ENCODE measurements at regions of chr6 and their contacts with region 1.

Region 1: GRCh38 chr6:74091136-74091793 is 395.3 kb downstream of the CD109 start:
- DNase-seq: peak; percentile 18
- H3K4me3 ChIP-seq: no peak overlapping the region; a peak in 1 of 4 replicates
- H3K27ac ChIP-seq: no peak overlapping the region
- H3K4me1 ChIP-seq: no peaks in the 10 kb centered on the region
- H3K27me3 ChIP-seq: no peaks in the 10 kb centered on the region
- CTCF ChIP-seq: peak; percentile 77
- EP300 ChIP-seq: no peak
- RAD21 ChIP-seq: peak; percentile 50

Region 2: GRCh38 chr6:73866305-73866704 is 225.0 kb before region 1 on chr6:
- CTCF ChIA-PET with region 1: no interaction called
- POLR2A ChIA-PET with region 1: no interaction called
- DNase-seq: no peak
- H3K4me3 ChIP-seq: no peak overlapping the region
- H3K27ac ChIP-seq: no peak overlapping the region
- H3K4me1 ChIP-seq: no peaks in the 10 kb centered on the region
- H3K27me3 ChIP-seq: no peaks in the 10 kb centered on the region
- CTCF ChIP-seq: no peak
- EP300 ChIP-seq: no peak
- RAD21 ChIP-seq: no peak

Region 3: GRCh38 chr6:74018825-74019224 is 72.4 kb before region 1 on chr6:
- CTCF ChIA-PET with region 1: no interaction called
- POLR2A ChIA-PET with region 1: no interaction called
- DNase-seq: no peak
- H3K4me3 ChIP-seq: no peak overlapping the region
- H3K27ac ChIP-seq: no peak overlapping the region
- H3K4me1 ChIP-seq: no peaks in the 10 kb centered on the region
- H3K27me3 ChIP-seq: no peaks in the 10 kb centered on the region
- CTCF ChIP-seq: no peak
- EP300 ChIP-seq: no peak
- RAD21 ChIP-seq: no peak

Region 4: DNA sequence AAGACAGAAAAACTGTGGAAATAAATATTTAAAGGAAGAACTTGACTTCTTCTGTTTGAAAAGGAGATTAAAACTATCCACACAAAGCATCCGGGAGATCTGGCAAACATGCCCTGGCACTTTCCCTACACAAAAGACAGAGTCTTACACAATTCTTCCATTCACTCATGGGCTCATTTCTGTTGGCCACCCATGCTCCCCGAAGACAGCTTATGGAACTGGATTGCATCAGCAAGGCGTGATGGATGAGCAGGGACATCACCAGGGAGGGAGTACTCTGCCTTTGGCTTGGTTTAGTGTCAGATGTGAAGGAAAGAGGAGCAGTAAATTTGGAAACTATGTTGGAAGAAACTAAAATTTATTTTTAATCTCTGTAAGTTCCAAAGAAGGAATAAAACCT is 15.9 kb before region 1 on chr6:
- CTCF ChIA-PET with region 1: interaction called, 17 read pairs
- POLR2A ChIA-PET with region 1: no interaction called
- DNase-seq: no peak
- H3K4me3 ChIP-seq: no peak overlapping the region
- H3K27ac ChIP-seq: no peak overlapping the region
- H3K4me1 ChIP-seq: no peaks in the 10 kb centered on the region
- H3K27me3 ChIP-seq: no peaks in the 10 kb centered on the region
- CTCF ChIP-seq: no peak
- EP300 ChIP-seq: no peak
- RAD21 ChIP-seq: no peak

Region 5: DNA sequence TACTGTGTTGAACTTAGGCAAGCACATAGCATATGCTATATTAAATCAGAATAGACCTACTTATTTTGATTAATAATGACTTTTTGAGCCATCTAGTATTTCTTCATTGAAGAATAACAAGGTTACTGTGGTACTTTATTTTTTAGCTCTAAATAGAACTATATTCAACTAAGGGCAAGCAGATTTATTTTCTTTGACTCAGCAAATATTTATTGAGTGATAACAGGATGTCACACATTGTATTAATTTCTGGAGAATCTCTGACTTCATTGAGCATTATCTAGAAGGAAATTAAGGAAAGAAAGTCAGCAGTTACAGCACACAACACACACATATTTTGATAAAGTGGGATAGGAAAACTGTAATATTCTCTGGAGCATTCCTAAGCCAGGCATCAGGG is 12.2 kb after region 1 on chr6:
- CTCF ChIA-PET with region 1: interaction called, 17 read pairs
- POLR2A ChIA-PET with region 1: no interaction called
- DNase-seq: no peak
- H3K4me3 ChIP-seq: no peak overlapping the region
- H3K27ac ChIP-seq: no peak overlapping the region
- H3K4me1 ChIP-seq: no peaks in the 10 kb centered on the region
- H3K27me3 ChIP-seq: no peaks in the 10 kb centered on the region; the same call in 1 of the 2 replicates
- CTCF ChIP-seq: no peak
- EP300 ChIP-seq: no peak
- RAD21 ChIP-seq: no peak

Region 6: DNA sequence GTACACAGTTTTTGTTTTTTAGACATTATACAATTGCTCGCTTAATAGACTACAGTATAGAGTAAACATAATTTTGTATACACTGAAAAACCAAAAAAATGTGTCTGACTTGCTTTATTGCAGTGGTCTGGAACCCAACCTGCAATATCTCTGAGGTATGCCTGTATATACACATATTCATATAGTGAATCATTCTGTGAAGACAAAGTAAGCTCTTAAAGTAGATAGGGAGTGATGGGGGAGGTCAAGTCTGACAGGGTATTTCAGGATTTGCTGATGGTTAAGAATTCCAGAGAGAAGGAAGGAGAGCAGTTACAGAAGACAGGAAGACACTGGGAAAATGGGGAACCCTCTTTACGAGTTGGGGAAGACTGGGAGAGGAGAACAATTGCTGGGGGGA is 22.6 kb after region 1 on chr6:
- CTCF ChIA-PET with region 1: interaction called, 11 read pairs
- POLR2A ChIA-PET with region 1: no interaction called
- DNase-seq: no peak
- H3K4me3 ChIP-seq: no peak overlapping the region
- H3K27ac ChIP-seq: no peak overlapping the region
- H3K4me1 ChIP-seq: no peaks in the 10 kb centered on the region
- H3K27me3 ChIP-seq: peaks cover 7% of the 10 kb centered on the region
- CTCF ChIP-seq: no peak
- EP300 ChIP-seq: no peak
- RAD21 ChIP-seq: no peak

Measured in SK-N-SH (cell line).